PC-9 (cell line): ENCODE measurements at regions of chr11 and their contacts with region 1.

Region 1: DNA sequence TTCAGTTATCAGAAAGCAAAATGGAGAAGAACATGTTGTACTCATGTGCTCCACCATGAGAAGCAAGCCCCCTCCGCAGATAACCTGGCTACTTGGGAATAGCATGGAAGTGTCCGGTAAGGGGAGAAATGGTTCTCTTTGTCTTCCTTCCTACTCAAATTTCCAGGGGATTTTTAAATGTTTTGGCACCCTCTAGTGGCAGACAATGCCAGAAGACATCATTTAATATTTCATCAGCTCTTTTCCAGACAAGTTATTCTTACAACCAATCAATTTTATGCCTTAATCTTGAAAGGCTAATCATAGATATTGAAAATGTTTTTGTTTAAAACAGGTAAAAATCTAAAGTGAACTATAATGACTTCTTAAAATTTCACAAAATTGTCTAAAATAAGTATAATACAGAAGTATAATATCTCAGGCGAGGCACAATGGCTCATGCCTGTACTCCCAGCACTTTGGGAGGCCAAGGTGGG is 15.7 kb downstream of the CRTAM start:
- DNase-seq: peak; percentile 45 to 69
- H3K4me3 ChIP-seq: no peak overlapping the region
- H3K27ac ChIP-seq: peak overlapping the region; percentile 100
- H3K4me1 ChIP-seq: peaks cover 57% of the 10 kb centered on the region
- H3K27me3 ChIP-seq: no peaks in the 10 kb centered on the region
- CTCF ChIP-seq: peak; percentile 90

Region 2: DNA sequence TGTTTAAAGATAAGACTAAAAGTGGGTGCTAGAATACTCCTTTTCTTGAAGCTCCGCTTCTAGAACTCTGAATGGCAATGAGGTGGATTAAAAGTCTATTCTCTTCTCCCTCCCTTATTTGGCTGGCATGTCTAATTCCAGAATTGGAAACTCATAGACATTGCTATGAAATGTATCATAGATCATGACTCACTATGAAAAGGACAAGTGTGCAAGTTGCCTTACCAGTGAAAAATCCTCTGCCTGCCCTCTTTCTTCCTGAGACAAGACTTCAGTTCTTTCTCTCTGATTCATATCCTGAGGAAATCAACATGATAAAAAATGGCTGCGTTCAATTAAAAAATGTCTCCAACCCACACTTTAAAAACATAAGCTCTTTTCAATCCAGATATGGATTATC is 664.8 kb before region 1 on chr11:
- CTCF ChIA-PET with region 1: interaction called, 22 read pairs
- POLR2A ChIA-PET with region 1: no interaction called
- intact Hi-C with region 1: no loop called
- DNase-seq: peak; percentile 25 to 90
- H3K4me3 ChIP-seq: no peak overlapping the region
- H3K27ac ChIP-seq: peak overlapping the region; percentile 87
- H3K4me1 ChIP-seq: peaks cover 49% of the 10 kb centered on the region
- H3K27me3 ChIP-seq: no peaks in the 10 kb centered on the region
- CTCF ChIP-seq: no peak

Region 3: DNA sequence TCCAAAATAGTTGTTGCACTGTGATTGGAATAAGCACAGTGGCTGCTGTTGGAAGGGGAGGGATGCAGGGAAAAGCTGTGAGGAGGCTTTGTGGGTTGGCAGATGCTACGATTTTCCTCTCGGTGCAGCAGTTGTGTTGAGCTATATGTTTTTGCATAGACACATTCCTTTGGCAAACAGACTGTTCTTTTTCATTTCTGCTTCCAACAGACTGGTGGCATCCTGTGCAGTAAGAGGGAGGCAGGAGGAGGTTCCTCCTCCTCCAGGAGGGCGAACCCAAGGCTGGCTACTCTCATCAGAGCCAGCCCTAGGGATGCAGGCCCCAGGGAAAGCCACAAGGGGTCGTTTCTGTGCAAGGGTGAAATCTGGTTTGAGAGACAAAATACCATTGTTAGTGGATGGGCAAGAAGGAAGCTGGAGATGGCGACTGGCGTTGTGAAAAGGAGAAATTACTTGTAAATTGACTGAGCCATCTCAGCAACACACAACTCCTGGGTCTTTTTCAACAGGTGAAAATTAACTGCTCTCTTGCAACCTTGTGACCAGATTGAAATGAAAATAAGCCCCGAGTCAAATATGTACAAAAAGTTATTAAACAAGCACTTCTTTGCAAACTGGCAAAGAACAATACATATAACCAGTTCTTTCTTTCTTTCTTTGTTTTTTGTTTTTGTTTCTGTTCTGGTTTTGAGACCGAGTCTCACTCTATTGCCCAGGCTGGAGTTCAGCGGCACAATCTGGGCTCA is 225.0 kb before region 1 on chr11:
- CTCF ChIA-PET with region 1: interaction called, 9 read pairs
- POLR2A ChIA-PET with region 1: no interaction called
- intact Hi-C with region 1: loop called (anchors 1 kb)
- DNase-seq: peak; percentile 53 to 65
- H3K4me3 ChIP-seq: no peak overlapping the region
- H3K27ac ChIP-seq: no peak overlapping the region
- H3K4me1 ChIP-seq: peaks cover 36% of the 10 kb centered on the region
- H3K27me3 ChIP-seq: no peaks in the 10 kb centered on the region
- CTCF ChIP-seq: peak; percentile 86

Region 4: GRCh38 chr11:122772945-122773344 is 81.1 kb before region 1 on chr11:
- CTCF ChIA-PET with region 1: no interaction called
- POLR2A ChIA-PET with region 1: no interaction called
- intact Hi-C with region 1: no loop called
- DNase-seq: no peak
- H3K4me3 ChIP-seq: no peak overlapping the region
- H3K27ac ChIP-seq: no peak overlapping the region
- H3K4me1 ChIP-seq: peaks cover 44% of the 10 kb centered on the region
- H3K27me3 ChIP-seq: no peaks in the 10 kb centered on the region
- CTCF ChIP-seq: no peak

Region 5: DNA sequence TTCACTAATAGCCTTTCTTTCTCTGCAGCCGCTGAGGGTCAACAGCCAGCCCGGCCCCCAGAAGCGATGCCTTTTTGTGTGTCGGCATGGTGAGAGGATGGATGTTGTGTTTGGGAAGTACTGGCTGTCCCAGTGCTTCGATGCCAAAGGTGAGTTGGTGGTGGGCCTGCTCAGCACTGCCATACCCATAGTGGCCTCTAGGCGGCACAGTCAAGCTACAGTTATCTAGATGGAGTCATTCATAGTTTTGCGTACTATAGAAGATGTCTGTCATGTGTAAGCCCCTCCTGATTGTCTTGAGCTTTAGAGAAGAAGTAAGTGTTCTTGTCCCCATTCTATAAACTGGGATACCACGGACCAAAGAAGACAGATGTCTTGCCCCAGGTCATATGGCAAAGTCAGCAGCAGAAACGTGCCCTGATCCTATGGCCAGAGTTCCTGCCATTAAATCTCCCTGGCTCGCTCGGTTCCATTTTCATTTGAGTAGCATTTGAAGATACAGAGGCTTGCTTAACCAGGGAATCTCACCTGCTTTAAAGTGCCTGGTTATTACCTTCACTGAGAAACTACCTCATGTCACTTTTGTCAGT is 57.8 kb before region 1 on chr11:
- CTCF ChIA-PET with region 1: interaction called, 20 read pairs
- POLR2A ChIA-PET with region 1: interaction called, 24 read pairs
- intact Hi-C with region 1: loop called (anchors 1 kb)
- DNase-seq: peak in 1 of 2 experiments; percentile 46
- H3K4me3 ChIP-seq: no peak overlapping the region
- H3K27ac ChIP-seq: no peak overlapping the region
- H3K4me1 ChIP-seq: peaks cover 13% of the 10 kb centered on the region
- H3K27me3 ChIP-seq: no peaks in the 10 kb centered on the region
- CTCF ChIP-seq: peak; percentile 96

Region 6: GRCh38 chr11:122910775-122911174 is 56.8 kb after region 1 on chr11:
- CTCF ChIA-PET with region 1: no interaction called
- POLR2A ChIA-PET with region 1: no interaction called
- intact Hi-C with region 1: no loop called
- DNase-seq: no peak
- H3K4me3 ChIP-seq: no peak overlapping the region
- H3K27ac ChIP-seq: no peak overlapping the region
- H3K4me1 ChIP-seq: no peaks in the 10 kb centered on the region
- H3K27me3 ChIP-seq: no peaks in the 10 kb centered on the region
- CTCF ChIP-seq: peak; percentile 36; the same call in 1 of the 2 replicates

Region 7: DNA sequence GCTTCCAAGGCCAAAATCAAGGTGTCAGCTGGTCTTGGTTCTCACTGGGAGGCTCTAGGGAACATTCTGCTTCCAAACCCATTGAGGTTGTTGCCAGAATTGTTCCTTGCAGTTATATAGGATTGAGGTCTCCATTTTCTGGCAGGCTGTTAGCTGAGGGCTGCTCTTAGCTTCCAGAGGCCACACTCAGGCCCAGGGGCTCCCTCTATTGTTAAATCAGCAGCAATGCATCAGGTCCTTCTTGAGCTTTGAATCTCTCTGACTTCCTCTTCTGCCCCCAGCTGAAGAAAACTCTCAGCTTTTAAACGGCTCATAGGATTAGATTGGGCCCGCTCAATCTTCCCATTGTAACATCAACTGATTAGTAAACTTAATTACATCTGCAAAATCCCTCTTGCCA is 167.0 kb after region 1 on chr11:
- CTCF ChIA-PET with region 1: interaction called, 19 read pairs
- POLR2A ChIA-PET with region 1: no interaction called
- intact Hi-C with region 1: no loop called
- DNase-seq: peak in 1 of 2 experiments; percentile 6
- H3K4me3 ChIP-seq: no peak overlapping the region
- H3K27ac ChIP-seq: no peak overlapping the region
- H3K4me1 ChIP-seq: peaks cover 5% of the 10 kb centered on the region; the same call in 1 of the 2 replicates
- H3K27me3 ChIP-seq: no peaks in the 10 kb centered on the region
- CTCF ChIP-seq: peak; percentile 73